ENCODE measurements at regions of chr6 and their contacts with region 1.

Region 1: DNA sequence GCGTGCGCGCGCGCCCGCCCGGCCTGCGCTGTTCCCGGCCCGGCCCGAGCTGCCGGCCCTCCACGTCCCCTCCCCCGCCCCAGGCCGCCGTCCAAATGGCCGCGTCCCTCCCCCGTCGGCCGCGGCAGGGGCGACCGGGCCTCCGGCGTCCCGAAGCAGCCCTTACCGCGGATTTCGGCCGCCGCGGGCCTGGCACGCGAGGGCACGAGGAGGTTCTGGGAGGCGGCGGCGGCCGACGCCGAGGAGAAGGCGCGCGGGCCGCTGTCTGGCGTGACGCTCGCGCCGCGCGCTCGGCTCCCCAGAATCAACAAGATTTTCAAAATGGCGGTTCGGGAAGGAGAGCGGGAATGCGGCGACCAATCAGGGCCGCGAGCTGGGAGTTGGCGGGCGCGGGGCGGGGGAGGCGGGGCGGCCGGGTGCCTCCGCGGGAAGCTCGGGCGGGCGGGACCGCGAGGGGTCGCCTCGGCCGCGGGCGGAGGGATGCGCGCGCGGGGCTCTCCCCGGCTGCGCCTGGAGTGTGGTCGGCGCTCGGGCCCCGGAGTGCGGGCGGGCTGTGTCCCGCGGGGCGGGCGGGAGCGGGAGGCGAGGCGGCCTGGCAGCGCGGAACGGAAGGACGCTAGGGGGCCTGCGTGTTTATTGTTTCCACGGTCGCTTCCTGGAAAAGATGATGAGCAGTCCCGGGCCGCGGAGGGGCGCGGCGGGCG is at the start of gene DEK:
- DNase-seq: peak; percentile 89 to 90
- ATAC-seq: peak; percentile 77 to 92 (median 88)
- H3K4me3 ChIP-seq: peak within 1 kb of the TSS; percentile 74 to 95 (median 90)
- H3K27ac ChIP-seq: peak within 1 kb of the TSS; percentile 89 to 98 (median 94)
- H3K4me1 ChIP-seq: peaks cover 0 to 45% (median 38%) of the 10 kb centered on the region in 9 donors
- H3K27me3 ChIP-seq: no peaks in the 10 kb centered on the region
- CTCF ChIP-seq: peak; percentile 36 to 78 (median 62)
- total RNA-seq, gene DEK: 38.6 to 78.3 (median 55.6) TPM

Region 2: DNA sequence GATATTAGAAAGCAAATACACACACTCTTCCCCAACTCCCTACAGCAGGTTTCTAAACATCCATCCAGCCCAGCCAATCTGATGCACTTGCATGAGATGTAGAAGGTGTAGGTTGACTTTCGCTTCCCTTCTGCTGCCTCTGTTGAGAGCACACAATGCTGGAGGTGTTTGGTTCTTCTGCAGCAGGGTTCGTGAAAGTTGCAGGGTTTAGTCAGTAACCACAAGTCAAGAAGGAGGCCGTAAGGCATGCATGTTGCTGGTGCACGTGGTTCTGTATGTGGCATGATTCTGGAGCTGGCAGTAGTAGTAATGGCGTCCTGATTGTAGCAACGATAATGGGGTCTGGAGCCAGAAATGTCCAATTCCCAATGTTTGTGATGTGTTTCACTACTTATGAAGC is 53.0 kb before region 1 on chr6:
- intact Hi-C with region 1: loop called in 1 of 10 experiments (anchors 5 kb)
- DNase-seq: no peak
- ATAC-seq: no peak
- H3K4me3 ChIP-seq: no peak overlapping the region
- H3K27ac ChIP-seq: no peak overlapping the region
- H3K4me1 ChIP-seq: peaks cover 0 to 18% (median 4%) of the 10 kb centered on the region in 9 donors
- H3K27me3 ChIP-seq: no peaks in the 10 kb centered on the region
- CTCF ChIP-seq: no peak